Activated T-helper 2 cell treated with anti-CD3 and anti-CD28 coated beads, Interferon-gamma antibody, Interleukin-2, Interleukin-4, amounts not matched to agents 10 μg/mL and 5 μg/mL and 100 μg/mL, durations not matched to agents 14 hours and 24 hours and 36 hours (primary cell): ENCODE measurements at regions of chrX and their contacts with region 1.

Region 1: GRCh38 chrX:101759000-101759399 is 99.3 kb upstream of the ARMCX2 start:
- DNase-seq: peak; percentile 8
- H3K4me3 Mint-ChIP-seq: no peak overlapping the region
- H3K27ac Mint-ChIP-seq: no peak overlapping the region
- H3K4me1 Mint-ChIP-seq: peaks cover 4% of the 10 kb centered on the region
- H3K27me3 Mint-ChIP-seq: no peaks in the 10 kb centered on the region

Region 2: DNA sequence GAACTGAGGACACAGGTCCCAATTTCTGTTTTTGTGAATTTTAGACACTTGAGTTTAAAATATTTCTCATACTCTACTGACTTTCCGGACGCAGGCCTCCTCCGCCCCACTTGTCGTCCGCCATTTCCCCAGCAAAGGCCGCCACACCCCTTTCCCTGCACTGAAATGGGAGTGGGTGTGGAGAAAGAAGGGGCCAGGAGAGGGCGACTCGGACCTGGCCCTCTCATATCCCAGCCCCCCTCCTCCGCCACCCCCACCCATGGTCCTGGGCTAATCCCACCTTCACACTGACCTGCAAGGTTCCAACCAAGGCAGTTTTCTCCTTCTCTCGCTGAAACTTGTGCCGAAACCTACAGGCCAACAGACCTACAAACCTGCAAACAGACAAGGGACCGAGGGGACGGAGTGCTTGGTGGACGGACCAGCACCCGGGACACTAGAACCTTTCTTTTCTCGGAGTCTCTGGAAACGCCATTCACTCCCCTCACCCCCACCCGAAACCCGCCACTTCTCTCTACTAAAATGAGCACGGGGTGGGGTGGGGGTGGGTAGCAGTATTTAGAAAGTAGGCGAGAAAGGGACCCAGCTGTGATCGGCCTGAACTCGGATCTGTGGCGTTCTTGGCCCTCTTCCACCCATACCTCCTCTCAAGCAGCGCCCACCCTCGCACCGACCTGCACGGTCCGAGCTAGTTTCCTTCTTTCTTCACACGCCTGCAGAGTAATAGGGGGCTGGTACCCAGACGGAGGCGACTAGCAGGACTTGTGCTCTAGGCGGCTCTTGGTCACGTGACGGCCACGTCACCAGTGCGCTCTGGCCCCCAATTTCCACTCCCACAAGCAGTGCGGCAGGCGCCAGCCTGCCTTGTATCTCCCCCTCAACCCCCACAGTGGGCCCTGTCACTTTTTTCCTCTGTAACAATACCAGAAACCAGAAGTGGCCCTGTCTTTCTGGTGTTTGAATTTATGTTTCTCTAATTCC is 141.5 kb before region 1 on chrX and contains the start of gene ARMCX6:
- intact Hi-C with region 1: loop called (anchors 5 kb)
- DNase-seq: peak; percentile 71
- H3K4me3 Mint-ChIP-seq: peak within 1 kb of the TSS; percentile 90
- H3K27ac Mint-ChIP-seq: peak within 1 kb of the TSS; percentile 90
- H3K4me1 Mint-ChIP-seq: peaks cover 43% of the 10 kb centered on the region
- H3K27me3 Mint-ChIP-seq: no peaks in the 10 kb centered on the region
- total RNA-seq, gene ARMCX6: 92.1 and 94.5 TPM in 2 replicates

Region 3: GRCh38 chrX:101823236-101823635 is 64.2 kb after region 1 on chrX:
- intact Hi-C with region 1: no loop called
- DNase-seq: no peak
- H3K4me3 Mint-ChIP-seq: no peak overlapping the region
- H3K27ac Mint-ChIP-seq: no peak overlapping the region
- H3K4me1 Mint-ChIP-seq: no peaks in the 10 kb centered on the region
- H3K27me3 Mint-ChIP-seq: no peaks in the 10 kb centered on the region